Activated CD8-positive, alpha-beta T cell treated with anti-CD3 and anti-CD28 coated beads, Interleukin-2, amount 10 ng/mL, durations not matched to agents 7 days and 5 days (primary cell): ENCODE measurements at regions of chr5 and their contacts with region 1.

Region 1: DNA sequence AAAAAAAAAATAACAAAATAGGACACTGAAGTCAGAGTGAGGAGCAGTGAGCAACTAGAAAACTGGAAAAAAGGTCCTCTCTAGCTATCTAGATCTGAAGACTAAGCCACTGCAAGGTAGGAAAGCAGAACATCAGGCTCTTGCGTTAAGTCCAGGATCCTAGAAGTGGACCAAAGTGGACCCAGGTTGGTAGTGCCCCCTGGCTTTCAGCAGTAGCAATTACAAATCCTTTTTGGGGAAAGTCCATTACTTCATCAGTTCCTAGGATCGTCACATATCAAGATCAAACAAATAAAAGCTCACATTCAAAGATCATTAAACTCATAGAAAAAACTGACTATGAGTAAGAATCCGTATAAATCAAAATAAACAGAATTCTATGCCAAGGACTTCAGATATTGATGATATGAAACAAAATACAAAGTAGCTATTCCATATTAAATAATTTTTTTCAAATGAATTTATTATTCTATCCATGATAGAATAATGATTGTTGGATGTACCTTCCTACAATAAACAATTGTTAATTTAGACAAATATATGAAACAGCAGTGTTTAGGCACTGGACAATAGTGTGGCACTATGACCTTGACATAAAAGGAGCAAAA is 6.5 kb upstream of the RICTOR start:
- DNase-seq: peak; percentile 53
- ATAC-seq: peak; percentile 47
- H3K4me3 Mint-ChIP-seq: no peak overlapping the region
- H3K27ac Mint-ChIP-seq: no peak overlapping the region
- H3K4me1 Mint-ChIP-seq: peaks cover 19% of the 10 kb centered on the region
- H3K27me3 Mint-ChIP-seq: peaks cover 29% of the 10 kb centered on the region

Region 2: GRCh38 chr5:38948501-38948900 is 132.2 kb before region 1 on chr5:
- CTCF ChIA-PET with region 1: interaction called, 14 read pairs
- POLR2A ChIA-PET with region 1: no interaction called
- DNase-seq: no peak
- ATAC-seq: no peak
- H3K4me3 Mint-ChIP-seq: no peak overlapping the region
- H3K27ac Mint-ChIP-seq: no peak overlapping the region
- H3K4me1 Mint-ChIP-seq: peaks cover 5% of the 10 kb centered on the region
- H3K27me3 Mint-ChIP-seq: no peaks in the 10 kb centered on the region

Region 3: GRCh38 chr5:39005566-39006232 is 75.0 kb before region 1 on chr5:
- CTCF ChIA-PET with region 1: interaction called, 22 read pairs
- POLR2A ChIA-PET with region 1: no interaction called
- DNase-seq: no peak
- ATAC-seq: no peak
- H3K4me3 Mint-ChIP-seq: no peak overlapping the region
- H3K27ac Mint-ChIP-seq: no peak overlapping the region
- H3K4me1 Mint-ChIP-seq: peaks cover 23% of the 10 kb centered on the region
- H3K27me3 Mint-ChIP-seq: no peaks in the 10 kb centered on the region

Region 4: DNA sequence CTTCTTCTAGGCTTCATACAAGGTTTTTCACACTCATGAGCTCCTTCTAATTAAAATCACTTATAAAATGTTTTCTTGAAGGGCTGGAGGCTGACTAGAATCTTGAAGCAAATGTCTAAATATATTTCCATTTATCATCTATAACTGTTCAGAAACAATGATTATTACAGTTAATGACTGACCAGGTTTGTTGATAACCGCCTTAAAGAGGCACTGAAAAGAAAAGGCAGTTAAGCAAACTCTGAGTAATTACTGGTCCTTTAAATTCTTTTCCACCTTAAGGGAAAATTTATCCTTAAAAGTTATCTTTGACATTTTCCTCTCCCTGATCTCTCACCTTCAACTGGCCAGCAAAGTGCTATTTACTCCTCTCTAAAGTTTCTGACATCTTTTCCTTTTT is 49.7 kb before region 1 on chr5:
- CTCF ChIA-PET with region 1: interaction called, 10 read pairs
- POLR2A ChIA-PET with region 1: no interaction called
- DNase-seq: no peak
- ATAC-seq: no peak
- H3K4me3 Mint-ChIP-seq: no peak overlapping the region
- H3K27ac Mint-ChIP-seq: no peak overlapping the region
- H3K4me1 Mint-ChIP-seq: peaks cover 1% of the 10 kb centered on the region
- H3K27me3 Mint-ChIP-seq: no peaks in the 10 kb centered on the region

Region 5: GRCh38 chr5:39099416-39099815 is 18.7 kb after region 1 on chr5:
- CTCF ChIA-PET with region 1: interaction called, 14 read pairs
- POLR2A ChIA-PET with region 1: no interaction called
- DNase-seq: no peak
- ATAC-seq: peak; percentile 24
- H3K4me3 Mint-ChIP-seq: no peak overlapping the region
- H3K27ac Mint-ChIP-seq: no peak overlapping the region
- H3K4me1 Mint-ChIP-seq: peaks cover 14% of the 10 kb centered on the region
- H3K27me3 Mint-ChIP-seq: no peaks in the 10 kb centered on the region

Region 6: GRCh38 chr5:39205550-39205949 is 124.8 kb after region 1 on chr5:
- CTCF ChIA-PET with region 1: no interaction called
- POLR2A ChIA-PET with region 1: no interaction called
- DNase-seq: no peak
- ATAC-seq: no peak
- H3K4me3 Mint-ChIP-seq: peak overlapping the region; percentile 86
- H3K27ac Mint-ChIP-seq: peak overlapping the region; percentile 86
- H3K4me1 Mint-ChIP-seq: peaks cover 69% of the 10 kb centered on the region
- H3K27me3 Mint-ChIP-seq: no peaks in the 10 kb centered on the region

Region 7: DNA sequence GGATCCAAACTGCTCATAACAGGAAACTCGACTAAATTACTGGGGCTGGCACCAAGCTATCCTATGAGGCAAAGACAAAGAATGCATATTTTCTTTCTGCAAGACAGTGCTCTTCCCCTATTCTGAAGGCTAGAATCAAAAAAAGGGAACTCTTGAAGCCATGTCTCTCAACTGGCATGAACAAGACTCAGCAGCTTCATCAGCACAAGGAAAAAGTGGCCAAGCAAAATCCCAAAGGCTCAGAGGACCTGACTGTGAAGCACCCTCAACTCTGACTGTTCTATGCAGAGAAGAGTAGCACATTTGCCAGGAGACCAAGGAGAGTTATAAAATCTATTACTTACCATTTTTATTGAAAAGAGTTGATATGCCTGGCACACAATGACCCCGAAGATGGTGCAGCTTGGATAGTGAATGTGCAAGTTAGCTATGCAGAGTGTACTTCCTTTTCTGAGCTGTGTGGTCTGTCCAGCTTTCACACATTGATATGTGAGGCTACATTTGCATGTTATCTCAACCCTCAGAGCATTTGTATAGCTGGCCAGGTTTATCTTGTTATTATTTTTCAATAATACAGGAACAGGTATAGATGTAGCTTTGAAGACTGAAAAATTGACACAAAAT is 189.6 kb after region 1 on chr5:
- CTCF ChIA-PET with region 1: no interaction called
- POLR2A ChIA-PET with region 1: no interaction called
- DNase-seq: peak; percentile 41
- ATAC-seq: peak; percentile 46
- H3K4me3 Mint-ChIP-seq: peak overlapping the region; percentile 62
- H3K27ac Mint-ChIP-seq: no peak overlapping the region
- H3K4me1 Mint-ChIP-seq: peaks cover 63% of the 10 kb centered on the region
- H3K27me3 Mint-ChIP-seq: no peaks in the 10 kb centered on the region